Activated CD4-positive, alpha-beta T cell treated with anti-CD3 and anti-CD28 coated beads, Interleukin-2, amount 10 ng/mL, durations not matched to agents 24 days and 14 days (primary cell): ENCODE measurements at regions of chr3 and their contacts with region 1.

Region 1: DNA sequence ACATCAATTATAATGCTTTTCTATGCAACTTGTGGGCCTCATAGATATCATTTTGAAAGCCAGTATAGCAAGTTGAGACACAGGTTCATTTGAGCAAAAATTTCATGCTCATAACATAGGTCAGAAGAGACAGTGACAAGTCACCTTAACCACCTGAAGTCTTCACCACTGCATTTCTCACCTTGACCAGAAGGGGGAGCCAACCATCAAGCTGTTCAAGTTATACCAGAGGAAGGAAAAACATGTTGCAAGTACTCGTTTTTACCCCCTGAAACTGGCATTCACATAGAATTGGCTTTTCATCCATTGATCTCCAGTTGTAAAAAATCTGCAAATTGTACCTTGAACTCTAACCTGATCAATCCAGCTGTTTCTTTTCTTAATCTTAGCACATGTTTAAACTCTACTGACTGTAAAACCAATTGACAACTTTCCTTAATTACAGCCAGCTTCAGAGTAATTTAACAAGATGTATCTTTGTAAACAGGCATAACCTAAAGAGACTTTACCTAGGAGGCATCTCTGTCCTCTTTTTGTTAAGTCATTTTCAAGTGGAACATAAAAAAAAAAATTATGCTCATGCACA is 1.4 kb downstream of the LMOD3 start:
- DNase-seq: peak; percentile 94
- H3K4me3 Mint-ChIP-seq: no peak overlapping the region
- H3K27ac Mint-ChIP-seq: no peak overlapping the region
- H3K4me1 Mint-ChIP-seq: peaks cover 4% of the 10 kb centered on the region
- H3K27me3 Mint-ChIP-seq: peaks cover 5% of the 10 kb centered on the region

Region 2: DNA sequence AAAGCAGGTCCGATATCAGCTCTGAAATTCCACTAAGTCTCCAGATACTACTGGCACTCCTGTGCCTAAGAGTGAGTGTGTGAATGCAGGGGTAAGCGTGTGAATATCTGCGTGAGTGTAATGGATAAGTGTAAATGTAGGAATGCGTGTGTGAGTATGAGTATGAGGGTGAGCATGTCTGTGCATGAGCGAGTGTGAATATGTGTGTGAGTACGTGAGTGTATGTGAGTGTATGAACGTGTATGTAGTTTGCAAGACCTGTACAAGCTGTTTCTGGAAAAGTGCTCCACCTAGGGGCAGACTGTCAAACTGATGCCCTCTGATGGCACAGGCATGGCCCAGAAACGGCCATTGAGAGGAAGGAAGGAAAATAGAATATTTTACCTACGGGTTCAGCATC is 289.3 kb after region 1 on chr3:
- intact Hi-C with region 1: loop called (anchors 5 kb)
- DNase-seq: peak; percentile 91
- H3K4me3 Mint-ChIP-seq: no peak overlapping the region
- H3K27ac Mint-ChIP-seq: no peak overlapping the region
- H3K4me1 Mint-ChIP-seq: peaks cover 11% of the 10 kb centered on the region
- H3K27me3 Mint-ChIP-seq: peaks cover 7% of the 10 kb centered on the region

Region 3: DNA sequence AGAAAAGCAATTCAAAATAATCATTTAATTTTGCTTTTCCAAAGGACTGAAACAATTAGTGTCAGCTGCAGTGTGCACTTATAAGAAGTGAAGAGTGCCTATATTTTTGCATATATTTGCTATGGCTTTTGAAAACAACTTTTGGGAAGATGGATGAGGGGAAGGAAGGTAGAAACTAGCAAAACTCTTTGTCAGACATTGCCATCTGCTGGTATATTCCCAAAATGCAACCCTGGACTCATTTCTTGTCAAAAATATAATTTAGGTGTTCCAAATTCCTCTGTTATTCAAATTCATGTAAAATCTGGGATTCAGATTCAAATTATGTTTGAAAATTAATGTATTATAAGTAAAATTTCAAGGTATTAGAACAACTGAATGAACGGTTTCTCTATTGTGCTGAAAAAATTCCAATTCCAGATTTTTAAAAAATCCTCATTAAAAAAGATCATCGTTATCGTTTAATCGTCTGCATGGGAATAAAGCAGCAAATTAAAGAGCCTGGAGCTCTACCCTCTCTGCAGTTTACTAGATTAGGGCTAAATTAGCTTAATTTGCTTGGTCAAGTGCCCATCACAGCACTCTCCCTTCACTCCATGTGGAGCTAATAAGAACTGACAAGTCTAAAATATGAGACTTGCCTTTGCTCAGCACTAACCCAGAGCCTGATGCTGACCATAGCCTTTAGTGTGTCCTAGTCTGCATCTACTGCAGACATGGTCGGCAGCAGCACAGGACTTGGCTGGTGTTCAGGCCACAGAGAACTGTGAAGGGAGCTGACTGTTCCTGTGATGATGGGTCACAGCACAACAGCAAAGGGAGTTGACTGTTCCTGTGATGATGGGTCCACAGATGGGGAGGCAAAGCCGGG is 550.3 kb after region 1 on chr3:
- intact Hi-C with region 1: loop called (anchors 1 kb)
- DNase-seq: peak; percentile 65
- H3K4me3 Mint-ChIP-seq: no peak overlapping the region
- H3K27ac Mint-ChIP-seq: no peak overlapping the region
- H3K4me1 Mint-ChIP-seq: no peaks in the 10 kb centered on the region
- H3K27me3 Mint-ChIP-seq: no peaks in the 10 kb centered on the region